ENCODE measurements at regions of chr4 and their contacts with region 1.

Region 1: DNA sequence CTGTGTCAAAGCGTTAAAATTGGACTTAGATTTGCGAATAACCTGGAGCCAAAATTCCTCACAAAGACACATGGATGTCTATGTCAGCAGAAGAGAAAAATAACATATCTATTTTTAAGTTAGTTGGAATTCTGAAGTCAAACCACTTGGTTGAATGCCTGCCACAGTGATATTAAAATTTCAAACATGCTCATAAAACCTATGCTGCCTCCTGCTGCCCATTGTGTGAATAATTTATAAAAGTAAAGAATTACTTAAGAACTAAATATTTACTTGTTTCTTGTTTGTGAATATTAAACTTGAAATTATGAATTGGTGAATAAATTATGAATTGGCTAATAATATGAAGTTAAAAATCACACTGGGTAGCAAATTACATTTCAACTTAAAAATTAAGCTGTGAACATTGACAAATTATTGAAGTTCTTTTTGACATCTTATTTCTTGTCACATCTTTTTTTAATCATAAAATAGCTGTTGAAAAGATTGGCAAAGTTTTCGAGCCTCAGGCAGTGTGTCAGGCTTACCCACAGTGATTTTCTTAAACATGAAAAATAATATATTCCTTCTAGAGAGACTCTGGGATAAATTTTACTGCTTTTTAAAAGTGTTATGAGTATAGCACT is 35.4 kb downstream of the FABP2 start:
- DNase-seq: no peak
- H3K4me3 Mint-ChIP-seq: no peak overlapping the region
- H3K27ac Mint-ChIP-seq: no peak overlapping the region
- H3K4me1 Mint-ChIP-seq: peaks cover 12% of the 10 kb centered on the region
- H3K27me3 Mint-ChIP-seq: no peaks in the 10 kb centered on the region

Region 2: GRCh38 chr4:119041951-119042560 is 244.4 kb before region 1 on chr4:
- intact Hi-C with region 1: loop called (anchors 1 kb)
- DNase-seq: peak; percentile 40
- H3K4me3 Mint-ChIP-seq: no peak overlapping the region
- H3K27ac Mint-ChIP-seq: no peak overlapping the region
- H3K4me1 Mint-ChIP-seq: peaks cover 6% of the 10 kb centered on the region
- H3K27me3 Mint-ChIP-seq: no peaks in the 10 kb centered on the region

Region 3: GRCh38 chr4:119238068-119238722 is 48.3 kb before region 1 on chr4:
- intact Hi-C with region 1: loop called (anchors 2 kb)
- DNase-seq: peak; percentile 31
- H3K4me3 Mint-ChIP-seq: peak overlapping the region; percentile 8
- H3K27ac Mint-ChIP-seq: peak overlapping the region; percentile 29
- H3K4me1 Mint-ChIP-seq: peaks cover 29% of the 10 kb centered on the region
- H3K27me3 Mint-ChIP-seq: no peaks in the 10 kb centered on the region

Region 4: GRCh38 chr4:119268451-119268850 is 18.0 kb before region 1 on chr4:
- intact Hi-C with region 1: loop called (anchors 1 kb)
- DNase-seq: no peak
- H3K4me3 Mint-ChIP-seq: no peak overlapping the region
- H3K27ac Mint-ChIP-seq: no peak overlapping the region
- H3K4me1 Mint-ChIP-seq: peaks cover 8% of the 10 kb centered on the region
- H3K27me3 Mint-ChIP-seq: no peaks in the 10 kb centered on the region

Region 5: DNA sequence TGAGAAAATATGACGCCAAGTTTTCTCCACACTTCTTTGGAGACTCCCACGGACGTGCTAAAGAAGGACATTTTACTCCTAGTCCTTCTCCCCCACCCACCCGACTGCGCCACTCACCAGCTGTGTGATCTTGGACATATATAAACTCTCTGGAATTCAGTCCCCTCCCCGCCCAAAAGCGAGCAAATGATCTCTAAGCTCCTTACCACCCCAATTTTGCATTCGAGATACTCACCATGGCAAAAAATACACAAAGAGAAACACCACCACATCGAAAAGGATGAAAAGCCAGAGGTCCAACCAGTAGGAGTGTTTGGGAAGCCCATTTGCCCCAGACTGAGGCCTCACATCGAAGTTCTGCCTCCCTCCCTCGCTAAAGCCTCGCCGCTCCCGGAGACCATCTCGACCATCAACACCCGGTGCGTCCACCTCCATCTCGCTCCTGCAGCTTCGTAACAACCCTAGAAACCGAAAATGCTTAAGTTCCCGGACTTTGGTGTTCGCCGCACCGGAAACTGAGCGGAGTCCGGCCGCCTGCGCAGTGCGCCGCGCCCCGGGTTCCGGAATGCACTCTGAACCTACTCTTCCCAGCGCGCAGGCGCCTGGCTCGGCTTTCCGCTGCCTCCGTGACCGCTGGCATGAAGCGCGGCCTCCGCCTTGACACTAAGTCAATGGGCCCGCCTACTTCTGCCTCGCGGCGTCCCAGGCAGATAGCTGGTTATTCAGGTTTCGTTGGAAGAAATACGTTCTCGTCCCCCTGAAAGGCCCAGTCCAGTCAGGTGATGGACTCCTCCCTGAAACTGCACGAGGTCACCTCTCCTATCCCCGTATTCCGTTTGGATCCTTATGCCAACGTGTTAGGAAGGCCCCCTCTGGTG is 13.8 kb after region 1 on chr4:
- intact Hi-C with region 1: loop called (anchors 1 kb)
- DNase-seq: peak; percentile 93
- H3K4me3 Mint-ChIP-seq: peak overlapping the region; percentile 97
- H3K27ac Mint-ChIP-seq: peak overlapping the region; percentile 97
- H3K4me1 Mint-ChIP-seq: peaks cover 38% of the 10 kb centered on the region
- H3K27me3 Mint-ChIP-seq: no peaks in the 10 kb centered on the region

Measured in activated T-helper 1 cell treated with anti-CD3 and anti-CD28 coated beads, Interleukin-12 subunit alpha, Interleukin-12 subunit beta, Interleukin-2, Interleukin-4 antibody, amounts not matched to agents 30 ng/mL and 10 ng/mL and 1 ng/mL, durations not matched to agents 14 hours and 24 hours and 36 hours (primary cell).